GM12878 (cell line): ENCODE measurements at regions of chr5 and their contacts with region 1.

Region 1: DNA sequence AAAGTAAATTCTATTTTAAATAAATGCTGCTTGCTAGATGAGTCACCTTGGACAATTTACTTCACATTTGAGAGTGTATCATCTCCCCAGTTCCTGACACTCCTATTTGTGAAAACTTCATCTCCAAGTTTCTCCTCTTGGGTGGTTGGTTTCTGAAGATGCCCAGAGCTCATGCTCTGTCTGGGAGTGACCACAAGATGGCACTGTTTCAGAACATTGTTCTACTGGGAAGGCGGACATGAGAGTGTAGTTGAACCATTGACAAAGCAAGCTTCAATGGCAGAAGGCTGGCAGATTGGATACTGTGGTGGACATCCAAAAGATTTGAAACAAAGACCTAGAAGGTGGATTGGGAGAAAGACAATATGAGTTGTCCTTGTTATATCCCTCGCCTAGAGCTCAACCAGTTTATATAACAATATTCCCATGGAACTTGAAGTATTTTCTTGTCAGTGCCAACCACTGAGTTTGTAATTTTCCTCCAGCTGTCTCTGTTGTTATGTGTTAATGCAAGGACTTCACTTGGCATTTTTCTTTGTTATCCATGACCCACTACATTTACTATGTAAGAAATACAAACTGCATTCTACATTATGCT is 234.3 kb upstream of the ANKH start:
- DNase-seq: no peak
- ATAC-seq: peak; percentile 93
- H3K4me3 ChIP-seq: no peak overlapping the region
- H3K27ac ChIP-seq: no peak overlapping the region
- H3K4me1 ChIP-seq: no peaks in the 10 kb centered on the region
- H3K27me3 ChIP-seq: no peaks in the 10 kb centered on the region
- CTCF ChIP-seq: peak; percentile 71 to 77 (median 74)
- EP300 ChIP-seq: no peak
- POLR2A ChIP-seq: no peak
- RAD21 ChIP-seq: peak; percentile 71

Region 2: GRCh38 chr5:15116996-15117395 is 11.1 kb after region 1 on chr5:
- CTCF ChIA-PET with region 1: interaction called, 15 read pairs
- POLR2A ChIA-PET with region 1: no interaction called
- RAD21 ChIA-PET with region 1: no interaction called
- SMC1A ChIA-PET with region 1: interaction called, 7 read pairs
- in situ Hi-C with region 1: no loop called
- intact Hi-C with region 1: no loop called
- DNase-seq: no peak
- ATAC-seq: no peak
- H3K4me3 ChIP-seq: no peak overlapping the region
- H3K27ac ChIP-seq: no peak overlapping the region
- H3K4me1 ChIP-seq: no peaks in the 10 kb centered on the region
- H3K27me3 ChIP-seq: no peaks in the 10 kb centered on the region
- CTCF ChIP-seq: no peak
- EP300 ChIP-seq: no peak
- POLR2A ChIP-seq: no peak
- RAD21 ChIP-seq: no peak

Region 3: GRCh38 chr5:15821506-15821905 is 715.6 kb after region 1 on chr5:
- CTCF ChIA-PET with region 1: interaction called, 21 read pairs
- POLR2A ChIA-PET with region 1: no interaction called
- RAD21 ChIA-PET with region 1: interaction called, 6 read pairs
- SMC1A ChIA-PET with region 1: interaction called, 12 read pairs
- in situ Hi-C with region 1: loop called (anchors 10 kb)
- intact Hi-C with region 1: loop called (anchors 1 kb)
- DNase-seq: no peak
- ATAC-seq: no peak
- H3K4me3 ChIP-seq: no peak overlapping the region
- H3K27ac ChIP-seq: no peak overlapping the region
- H3K4me1 ChIP-seq: no peaks in the 10 kb centered on the region
- H3K27me3 ChIP-seq: no peaks in the 10 kb centered on the region
- CTCF ChIP-seq: no peak
- EP300 ChIP-seq: no peak
- POLR2A ChIP-seq: no peak
- RAD21 ChIP-seq: no peak

Region 4: GRCh38 chr5:15995341-15996052 is 889.6 kb after region 1 on chr5:
- CTCF ChIA-PET with region 1: interaction called, 5 read pairs
- POLR2A ChIA-PET with region 1: no interaction called
- RAD21 ChIA-PET with region 1: no interaction called
- SMC1A ChIA-PET with region 1: no interaction called
- in situ Hi-C with region 1: no loop called
- intact Hi-C with region 1: loop called (anchors 1 kb)
- DNase-seq: no peak
- ATAC-seq: peak; percentile 85
- H3K4me3 ChIP-seq: no peak overlapping the region
- H3K27ac ChIP-seq: no peak overlapping the region
- H3K4me1 ChIP-seq: no peaks in the 10 kb centered on the region
- H3K27me3 ChIP-seq: no peaks in the 10 kb centered on the region
- CTCF ChIP-seq: peak in 2 of 3 experiments; percentile 6 to 34; a peak in 1 of 6 replicates
- EP300 ChIP-seq: no peak
- POLR2A ChIP-seq: no peak
- RAD21 ChIP-seq: no peak